Head of caudate nucleus (tissue), 42 donors: ENCODE measurements at regions of chr10 and their contacts with region 1.

Region 1: DNA sequence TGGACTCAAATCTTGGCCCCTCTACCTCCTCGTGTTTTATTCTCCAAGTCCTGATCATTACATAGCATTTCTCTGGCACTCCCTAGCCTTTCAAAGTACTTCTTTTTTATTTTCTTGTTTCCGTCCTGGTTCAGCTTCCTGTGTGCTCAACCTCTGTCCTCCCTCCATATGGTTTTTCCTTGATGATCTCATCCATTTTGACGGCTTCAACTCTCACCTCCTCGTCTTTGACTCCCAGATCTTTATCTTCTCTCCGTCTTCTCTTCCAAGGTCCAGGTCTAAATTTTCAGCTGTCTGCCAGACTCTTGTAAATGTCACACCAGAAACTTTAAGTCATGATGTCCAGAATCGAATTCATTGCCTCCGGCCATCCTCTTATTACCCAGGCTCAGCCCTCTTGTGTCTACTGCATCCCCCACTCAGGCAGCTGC is 23.3 kb upstream of the GFRA1 start:
- DNase-seq: no peak

Region 2: DNA sequence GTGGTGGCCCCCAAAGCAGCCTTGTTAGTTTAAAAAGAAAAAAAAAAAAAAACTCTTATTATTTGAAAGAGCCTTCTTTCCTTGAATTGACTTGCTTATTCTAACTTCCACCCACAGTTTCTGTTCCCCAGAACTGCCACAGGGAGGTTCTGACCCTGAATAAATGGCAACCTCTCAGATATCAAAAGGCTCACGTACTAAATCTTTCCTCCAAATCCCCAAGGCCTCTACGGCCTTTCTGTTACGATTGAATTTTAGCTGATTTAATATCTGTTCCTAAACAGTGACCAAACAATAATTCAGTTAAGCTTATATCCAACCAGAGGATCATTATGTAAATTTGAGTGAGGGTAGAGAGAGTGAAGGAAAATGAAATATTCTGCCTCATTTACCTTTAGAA is 506.1 kb before region 1 on chr10:
- intact Hi-C with region 1: loop called (anchors 10 kb)
- DNase-seq: no peak

Region 3: GRCh38 chr10:116353817-116354216 is 57.5 kb after region 1 on chr10:
- intact Hi-C with region 1: no loop called
- DNase-seq: no peak

Region 4: GRCh38 chr10:116589926-116590325 is 293.6 kb after region 1 on chr10:
- intact Hi-C with region 1: no loop called
- DNase-seq: no peak